Left cardiac atrium (tissue), 4 donors: ENCODE measurements at regions of chr17 and their contacts with region 1.

Region 1: DNA sequence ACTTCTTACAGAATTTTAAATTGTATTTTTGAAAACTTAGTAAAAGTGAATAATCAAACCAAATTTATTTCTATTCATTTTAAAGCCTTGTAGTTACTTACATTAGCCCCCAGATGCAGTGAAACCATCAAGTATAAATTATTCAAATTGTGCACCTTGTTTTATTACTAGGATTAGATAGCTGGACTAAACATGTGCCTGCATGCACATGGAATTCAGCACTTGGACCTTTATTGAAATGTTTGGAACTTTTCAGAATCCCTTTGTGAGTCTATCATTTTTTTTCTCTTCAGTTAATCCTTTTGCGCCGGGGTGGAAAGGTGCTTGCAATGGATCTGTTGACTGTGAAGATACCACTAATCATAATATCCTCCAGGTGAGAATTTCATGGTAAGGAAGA is 4.7 kb downstream of the ZPBP2 start:
- DNase-seq: no peak
- ATAC-seq: no peak

Region 2: GRCh38 chr17:39979893-39980350 is 107.2 kb after region 1 on chr17:
- intact Hi-C with region 1: loop called in 1 of 2 experiments (anchors 10 kb)
- DNase-seq: peak; percentile 26
- ATAC-seq: peak; percentile 3 to 16